ENCODE measurements at regions of chr1 and their contacts with region 1.

Region 1: DNA sequence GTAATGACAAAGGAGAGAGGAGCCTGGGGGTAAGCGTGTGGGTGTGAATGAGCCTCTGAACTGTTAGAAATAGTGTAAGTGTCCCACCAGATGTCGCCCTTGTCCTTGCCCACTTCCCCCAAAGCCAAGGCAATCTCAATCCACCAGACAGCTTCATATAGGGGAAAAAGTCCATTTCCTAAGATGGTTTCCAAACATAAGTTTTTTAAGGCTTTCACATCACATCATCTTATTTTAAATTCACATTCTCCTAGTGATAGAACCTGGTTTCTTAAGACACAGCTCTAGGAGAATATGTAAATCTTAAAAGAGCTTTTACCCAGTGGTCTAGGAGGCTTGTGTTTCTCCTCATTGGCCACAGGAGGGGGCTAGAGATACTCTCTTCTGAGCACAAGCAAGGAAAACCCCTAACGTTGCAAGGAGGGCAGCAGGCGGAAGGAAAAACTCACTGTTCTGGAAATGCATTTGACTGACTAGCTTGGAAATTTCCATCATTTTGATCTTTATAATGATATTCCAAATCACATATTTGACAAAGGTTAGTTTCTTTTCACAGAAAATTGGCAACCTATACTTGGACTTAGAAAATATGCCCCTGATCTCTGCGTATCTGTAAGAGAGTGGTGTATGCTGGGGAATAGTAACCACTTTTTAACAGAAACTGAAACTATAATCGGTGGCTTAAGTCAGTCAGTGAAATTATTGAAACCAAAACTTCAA is 51.9 kb upstream of the LPAR3 start:
- DNase-seq: peak; percentile 89 to 94 (median 91)
- H3K4me3 ChIP-seq: peak overlapping the region; percentile 55 to 82
- H3K4me3 Mint-ChIP-seq: peak overlapping the region; percentile 85 to 97 (median 90)
- H3K27ac ChIP-seq: peak overlapping the region; percentile 81
- H3K27ac Mint-ChIP-seq: peak overlapping the region; percentile 92 to 100 (median 97)
- H3K4me1 ChIP-seq: peaks cover 5% of the 10 kb centered on the region
- H3K4me1 Mint-ChIP-seq: peaks cover 5 to 15% (median 11%) of the 10 kb centered on the region in 4 donors
- H3K27me3 ChIP-seq: no peaks in the 10 kb centered on the region
- H3K27me3 Mint-ChIP-seq: no peaks in the 10 kb centered on the region

Region 2: DNA sequence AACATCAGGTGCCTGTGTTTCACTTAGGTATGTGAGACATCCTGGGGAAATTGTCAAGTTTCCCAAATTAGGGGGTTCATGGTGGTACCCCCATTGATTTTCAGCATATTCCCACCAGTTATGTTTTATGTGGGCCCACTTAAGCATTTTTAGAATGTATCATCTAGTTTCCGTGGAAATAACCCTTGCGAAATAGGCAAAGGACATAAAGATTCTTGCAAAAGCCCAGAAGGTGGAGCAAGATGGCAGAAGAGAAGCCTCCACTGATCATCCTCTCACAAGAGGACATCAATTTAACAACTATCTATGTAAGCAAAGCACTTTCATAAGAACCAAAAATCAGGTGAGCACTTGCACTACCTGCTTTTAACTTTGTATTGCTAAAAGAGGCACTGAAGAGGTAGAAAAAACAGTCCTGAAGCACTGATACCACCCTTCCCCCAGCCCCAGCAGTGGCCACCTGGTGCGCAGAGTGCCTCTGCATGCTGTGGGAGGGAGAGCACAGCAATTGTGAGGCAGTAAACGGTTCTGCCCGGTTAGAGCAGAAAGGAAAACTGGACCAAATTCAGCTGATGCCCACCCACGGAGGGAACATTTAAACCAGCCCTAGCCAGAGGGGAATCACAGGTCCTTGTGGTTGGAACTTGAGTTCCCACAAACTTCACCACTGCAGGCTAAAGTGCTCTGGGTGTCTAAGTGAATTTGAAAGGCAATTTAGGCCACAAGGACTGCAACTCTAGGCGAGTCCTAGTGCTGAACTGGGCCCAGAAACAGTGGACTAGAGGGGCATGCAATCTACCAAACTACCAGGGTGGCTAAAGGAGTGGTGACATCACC is 28.8 kb after region 1 on chr1:
- CTCF ChIA-PET with region 1: interaction called, 19 read pairs
- POLR2A ChIA-PET with region 1: interaction called, 3 read pairs
- intact Hi-C with region 1: no loop called
- DNase-seq: peak in 1 of 5 donors; percentile 25
- H3K4me3 ChIP-seq: no peak overlapping the region
- H3K4me3 Mint-ChIP-seq: peak overlapping the region in 3 of 8 donors; percentile 10 to 30 (median 23)
- H3K27ac ChIP-seq: no peak overlapping the region
- H3K27ac Mint-ChIP-seq: peak overlapping the region in 4 of 7 donors; percentile 15 to 82 (median 48)
- H3K4me1 ChIP-seq: peaks cover 24% of the 10 kb centered on the region
- H3K4me1 Mint-ChIP-seq: peaks cover 26 to 47% (median 36%) of the 10 kb centered on the region in 4 donors
- H3K27me3 ChIP-seq: no peaks in the 10 kb centered on the region
- H3K27me3 Mint-ChIP-seq: no peaks in the 10 kb centered on the region

Region 3: DNA sequence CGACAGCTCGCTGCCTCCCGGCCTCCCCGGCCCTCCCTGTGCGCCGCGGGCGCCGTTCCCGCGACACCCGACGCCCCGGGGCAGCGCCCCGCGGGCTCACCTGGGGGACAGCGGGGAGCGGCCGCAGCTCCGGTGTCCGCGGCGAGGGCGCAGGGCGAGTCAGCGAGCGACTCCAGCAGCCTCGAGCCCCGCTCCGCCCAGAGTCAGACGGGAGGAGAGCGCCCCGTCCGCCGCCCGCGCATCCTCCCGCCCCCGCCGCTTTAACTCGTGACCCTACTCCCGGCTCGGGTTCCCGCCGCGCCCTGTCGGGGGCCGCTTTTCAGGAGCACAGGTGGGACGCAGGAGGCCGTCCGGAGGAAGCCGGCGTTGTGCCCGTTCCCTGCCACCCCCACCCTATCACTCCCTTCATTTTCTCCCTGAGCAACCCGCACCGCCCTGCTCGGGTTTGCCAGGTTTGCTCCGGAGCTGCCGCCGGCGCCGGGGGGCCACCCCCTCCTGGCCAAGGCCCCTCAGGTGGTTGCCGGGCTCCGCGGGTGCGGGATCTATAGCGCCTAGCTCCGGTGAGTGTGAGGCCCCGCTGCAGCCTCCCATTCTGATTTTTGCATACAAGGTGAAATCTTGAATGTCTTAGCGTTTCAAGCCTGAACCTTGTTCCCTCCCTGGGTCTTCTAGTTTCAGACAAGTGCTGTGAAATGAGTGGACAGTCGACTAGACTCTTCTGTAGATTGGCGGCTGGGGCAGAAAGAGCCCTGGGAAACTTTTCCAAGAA is 103.6 kb after region 1 on chr1 and contains the start of gene MCOLN3:
- CTCF ChIA-PET with region 1: interaction called, 16 read pairs
- POLR2A ChIA-PET with region 1: no interaction called
- intact Hi-C with region 1: no loop called
- DNase-seq: peak in 4 of 5 donors; percentile 20 to 50 (median 34)
- H3K4me3 ChIP-seq: peak within 1 kb of the TSS in 1 of 2 donors; percentile 39
- H3K4me3 Mint-ChIP-seq: peak within 1 kb of the TSS; percentile 76 to 87 (median 82)
- H3K27ac ChIP-seq: no peak within 1 kb of the TSS
- H3K27ac Mint-ChIP-seq: peak within 1 kb of the TSS in 1 of 7 donors; percentile 67
- H3K4me1 ChIP-seq: peaks cover 35% of the 10 kb centered on the region
- H3K4me1 Mint-ChIP-seq: peaks cover 15 to 38% (median 25%) of the 10 kb centered on the region in 4 donors
- H3K27me3 ChIP-seq: peaks cover 24% of the 10 kb centered on the region
- H3K27me3 Mint-ChIP-seq: peaks cover 21 to 36% of the 10 kb centered on the region in 2 donors
- total RNA-seq, gene MCOLN3: 0.80 to 1.3 TPM

Region 4: DNA sequence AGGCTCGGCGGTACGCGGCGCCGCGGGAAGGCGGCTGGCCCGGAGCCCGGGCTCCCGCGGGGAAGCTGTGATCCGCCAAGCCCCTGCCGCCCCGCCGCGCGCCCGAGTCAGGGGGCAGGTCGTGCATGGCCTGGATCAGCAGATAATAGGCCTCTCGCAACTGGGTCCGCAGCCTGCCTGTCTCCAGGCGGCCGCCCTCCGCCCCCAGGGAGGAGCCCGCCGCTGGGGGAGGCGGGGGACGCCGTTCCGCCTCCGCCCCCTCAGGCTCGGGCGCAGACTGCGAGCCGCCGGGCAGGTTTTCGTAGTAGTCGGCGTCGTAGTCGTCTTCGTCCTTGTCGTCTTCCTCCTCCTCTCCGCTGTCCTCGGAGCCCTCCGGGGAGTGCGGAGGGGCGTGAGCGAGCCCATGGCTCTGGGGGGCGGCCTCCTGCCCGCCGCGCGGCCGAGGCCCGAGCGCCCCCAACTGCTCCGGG is 256.0 kb after region 1 on chr1 and contains the start of gene SYDE2:
- CTCF ChIA-PET with region 1: interaction called, 4 read pairs
- POLR2A ChIA-PET with region 1: interaction called, 5 read pairs
- intact Hi-C with region 1: loop called (anchors 1 kb)
- DNase-seq: peak; percentile 84 to 89 (median 86)
- H3K4me3 ChIP-seq: peak within 1 kb of the TSS; percentile 72 to 73
- H3K4me3 Mint-ChIP-seq: peak within 1 kb of the TSS; percentile 96 to 99 (median 98)
- H3K27ac ChIP-seq: peak within 1 kb of the TSS; percentile 82
- H3K27ac Mint-ChIP-seq: peak within 1 kb of the TSS; percentile 97 to 99 (median 98)
- H3K4me1 ChIP-seq: peaks cover 27% of the 10 kb centered on the region
- H3K4me1 Mint-ChIP-seq: peaks cover 18 to 37% (median 27%) of the 10 kb centered on the region in 4 donors
- H3K27me3 ChIP-seq: no peaks in the 10 kb centered on the region
- H3K27me3 Mint-ChIP-seq: peaks cover 2 to 3% of the 10 kb centered on the region in 2 donors
- total RNA-seq, gene SYDE2: 5.0 to 5.2 TPM

Region 5: GRCh38 chr1:85276215-85276977 is 331.5 kb after region 1 on chr1 and contains the start of gene BCL10:
- CTCF ChIA-PET with region 1: interaction called, 28 read pairs
- POLR2A ChIA-PET with region 1: interaction called, 20 read pairs
- intact Hi-C with region 1: loop called (anchors 1 kb)
- DNase-seq: peak; percentile 96 to 98 (median 97)
- H3K4me3 ChIP-seq: peak within 1 kb of the TSS; percentile 75 to 94
- H3K4me3 Mint-ChIP-seq: peak within 1 kb of the TSS; percentile 88 to 93 (median 92)
- H3K27ac ChIP-seq: peak within 1 kb of the TSS; percentile 94
- H3K27ac Mint-ChIP-seq: peak within 1 kb of the TSS; percentile 94 to 97 (median 96)
- H3K4me1 ChIP-seq: peaks cover 55% of the 10 kb centered on the region
- H3K4me1 Mint-ChIP-seq: peaks cover 42 to 62% (median 53%) of the 10 kb centered on the region in 4 donors
- H3K27me3 ChIP-seq: no peaks in the 10 kb centered on the region
- H3K27me3 Mint-ChIP-seq: no peaks in the 10 kb centered on the region
- total RNA-seq, gene BCL10: 36.1 to 37.0 TPM